CD8-positive, alpha-beta T cell (primary cell): ENCODE measurements at regions of chr1 and their contacts with region 1.

Region 1: GRCh38 chr1:197692965-197693364 is 82.3 kb downstream of the DENND1B start:
- DNase-seq: peak in 1 of 9 experiments; percentile 14
- ATAC-seq: no peak
- H3K4me3 ChIP-seq: no peak overlapping the region
- H3K4me3 Mint-ChIP-seq: no peak overlapping the region
- H3K27ac ChIP-seq: no peak overlapping the region
- H3K27ac Mint-ChIP-seq: no peak overlapping the region
- H3K4me1 ChIP-seq: no peaks in the 10 kb centered on the region
- H3K4me1 Mint-ChIP-seq: peaks cover 14% of the 10 kb centered on the region
- H3K27me3 ChIP-seq: no peaks in the 10 kb centered on the region
- H3K27me3 Mint-ChIP-seq: no peaks in the 10 kb centered on the region
- CTCF ChIP-seq: no peak

Region 2: GRCh38 chr1:197915862-197916499 is 223.0 kb after region 1 on chr1:
- CTCF ChIA-PET with region 1: no interaction called
- POLR2A ChIA-PET with region 1: no interaction called
- intact Hi-C with region 1: loop called in 1 of 2 experiments (anchors 1 kb)
- DNase-seq: peak in 1 of 9 experiments; percentile 34
- ATAC-seq: no peak
- H3K4me3 ChIP-seq: peak overlapping the region in 1 of 2 experiments; percentile 15
- H3K4me3 Mint-ChIP-seq: peak overlapping the region; percentile 29
- H3K27ac ChIP-seq: no peak overlapping the region
- H3K27ac Mint-ChIP-seq: no peak overlapping the region
- H3K4me1 ChIP-seq: peaks cover 79% of the 10 kb centered on the region
- H3K4me1 Mint-ChIP-seq: peaks cover 87% of the 10 kb centered on the region
- H3K27me3 ChIP-seq: peaks cover 84 to 88% of the 10 kb centered on the region in 2 experiments
- H3K27me3 Mint-ChIP-seq: peaks cover 96% of the 10 kb centered on the region
- CTCF ChIP-seq: no peak

Region 3: DNA sequence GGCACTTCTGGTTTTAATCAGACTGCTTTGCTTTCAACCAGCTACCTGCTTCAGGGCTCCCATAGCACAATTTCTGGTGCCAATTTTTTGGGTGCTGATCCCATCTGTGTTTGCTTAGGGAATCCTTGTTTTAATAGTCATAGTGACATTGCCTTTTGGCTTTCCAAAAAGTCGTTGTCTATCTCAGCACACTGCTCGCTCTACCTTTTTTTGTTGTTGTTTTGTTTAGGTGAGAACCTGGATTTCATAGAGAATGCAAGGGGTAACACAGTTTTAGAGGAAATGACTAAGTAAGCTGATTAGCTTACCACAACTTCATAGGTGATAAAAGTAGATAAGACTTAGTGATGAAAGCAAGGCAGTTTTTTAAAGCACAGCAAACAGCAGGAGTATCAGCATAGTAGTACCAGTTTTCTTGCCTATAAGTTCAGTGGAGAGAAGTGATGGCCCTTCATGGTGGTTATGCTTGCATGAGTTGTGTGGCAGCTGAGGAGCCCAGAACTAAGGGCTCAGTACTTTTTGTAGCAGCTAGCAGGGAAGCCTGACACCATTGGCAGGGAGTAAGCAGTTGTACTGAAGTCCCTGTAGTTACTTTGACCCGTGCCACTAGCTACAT is 495.1 kb after region 1 on chr1:
- CTCF ChIA-PET with region 1: no interaction called
- POLR2A ChIA-PET with region 1: no interaction called
- intact Hi-C with region 1: no loop called
- DNase-seq: peak in 6 of 9 experiments; percentile 27 to 79 (median 45)
- ATAC-seq: peak; percentile 87
- H3K4me3 ChIP-seq: no peak overlapping the region
- H3K4me3 Mint-ChIP-seq: peak overlapping the region; percentile 23
- H3K27ac ChIP-seq: peak overlapping the region in 1 of 2 experiments; percentile 78
- H3K27ac Mint-ChIP-seq: peak overlapping the region; percentile 81
- H3K4me1 ChIP-seq: peaks cover 64% of the 10 kb centered on the region
- H3K4me1 Mint-ChIP-seq: peaks cover 83% of the 10 kb centered on the region
- H3K27me3 ChIP-seq: no peaks in the 10 kb centered on the region
- H3K27me3 Mint-ChIP-seq: no peaks in the 10 kb centered on the region
- CTCF ChIP-seq: no peak